WTC11 (cell line): ENCODE measurements at regions of chr7 and their contacts with region 1.

Region 1: GRCh38 chr7:49791088-49791741 is 17.8 kb downstream of the VWC2 start:
- DNase-seq: peak; percentile 48
- ATAC-seq: peak; percentile 83
- H3K4me3 Mint-ChIP-seq: no peak overlapping the region
- H3K27ac Mint-ChIP-seq: peak overlapping the region; percentile 9; the same call in 1 of the 2 replicates
- H3K4me1 Mint-ChIP-seq: peaks cover 22% of the 10 kb centered on the region
- H3K27me3 Mint-ChIP-seq: peaks cover 4% of the 10 kb centered on the region; the same call in 1 of the 2 replicates
- CTCF ChIP-seq: no peak

Region 2: GRCh38 chr7:49776994-49777393 is 14.2 kb before region 1 on chr7:
- CTCF ChIA-PET with region 1: interaction called, 39 read pairs
- POLR2A ChIA-PET with region 1: no interaction called
- DNase-seq: peak; percentile 73
- ATAC-seq: peak; percentile 42
- H3K4me3 Mint-ChIP-seq: peak overlapping the region; percentile 52; the same call in 1 of the 2 replicates
- H3K27ac Mint-ChIP-seq: no peak overlapping the region
- H3K4me1 Mint-ChIP-seq: peaks cover 25% of the 10 kb centered on the region
- H3K27me3 Mint-ChIP-seq: peaks cover 51% of the 10 kb centered on the region
- CTCF ChIP-seq: peak; percentile 43; the same call in 1 of the 2 replicates

Region 3: DNA sequence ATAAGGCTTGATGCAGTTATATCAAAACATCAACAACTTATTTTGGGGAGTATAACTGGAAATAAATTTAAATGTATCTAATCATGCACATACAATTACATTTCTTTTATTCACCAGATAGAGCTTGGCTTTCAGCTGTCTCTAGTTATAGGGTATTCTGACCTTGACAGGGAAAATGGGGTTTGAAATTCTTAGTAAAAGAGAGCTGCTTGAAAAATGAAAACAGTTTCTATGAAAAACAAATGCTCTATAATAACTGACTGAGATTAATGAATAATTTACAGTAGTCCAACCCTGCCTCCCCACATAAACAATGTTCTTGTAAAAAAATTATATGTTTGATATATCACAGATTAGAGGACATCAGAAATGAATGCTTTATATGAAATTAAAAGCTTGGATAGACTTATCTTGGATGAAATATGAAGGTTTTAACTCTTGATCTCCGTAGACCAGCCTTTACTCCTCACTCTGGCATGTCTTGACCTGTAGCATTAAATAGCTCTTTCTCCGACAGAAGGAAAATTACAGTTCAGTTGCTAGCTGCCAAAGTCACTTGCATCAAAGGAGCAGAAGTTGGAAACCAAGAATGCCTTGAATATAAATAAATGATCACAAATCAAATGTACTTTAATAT is 14.3 kb after region 1 on chr7:
- CTCF ChIA-PET with region 1: no interaction called
- POLR2A ChIA-PET with region 1: no interaction called
- DNase-seq: no peak
- ATAC-seq: no peak
- H3K4me3 Mint-ChIP-seq: no peak overlapping the region
- H3K27ac Mint-ChIP-seq: no peak overlapping the region
- H3K4me1 Mint-ChIP-seq: no peaks in the 10 kb centered on the region
- H3K27me3 Mint-ChIP-seq: no peaks in the 10 kb centered on the region
- CTCF ChIP-seq: no peak